ENCODE measurements at regions of chr7 and their contacts with region 1.

Region 1: DNA sequence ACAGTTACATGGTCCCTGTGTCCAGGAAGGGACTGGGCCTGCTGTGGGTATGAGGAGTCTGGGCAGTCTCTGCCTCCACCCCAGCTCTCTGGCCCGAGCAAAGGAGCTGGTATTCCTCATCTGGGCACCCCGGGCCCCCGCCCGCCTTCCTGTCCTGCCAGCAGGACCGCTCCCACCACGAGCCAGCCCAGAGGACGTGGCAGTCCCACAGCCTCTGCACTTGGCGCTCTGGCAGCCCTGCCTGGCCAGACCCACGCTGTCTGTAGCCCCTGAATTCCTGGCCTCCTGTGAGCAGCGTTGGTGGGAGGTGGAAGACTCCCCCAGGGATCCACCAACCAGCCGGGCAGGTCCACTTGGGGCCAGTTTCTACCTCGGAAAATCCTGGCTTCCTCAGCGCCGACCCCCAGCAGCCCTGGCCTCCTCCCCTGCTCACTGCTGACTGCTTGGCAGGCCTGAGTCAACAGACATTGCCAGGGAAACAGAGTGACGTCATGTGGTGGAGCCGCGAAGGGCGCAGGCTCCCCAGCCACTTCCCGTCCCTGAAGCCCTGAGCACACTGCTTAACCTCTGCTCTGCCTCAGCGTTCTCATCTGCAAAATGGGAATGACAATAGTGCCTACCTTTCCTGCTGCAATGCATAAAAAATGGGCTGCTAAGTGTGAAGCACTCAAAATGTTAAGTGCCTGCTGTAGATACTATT is 21.6 kb upstream of the LIMK1 start:
- DNase-seq: peak; percentile 78 to 88
- ATAC-seq: peak; percentile 90 to 96 (median 93)
- H3K4me3 ChIP-seq: peak overlapping the region in 7 of 10 donors; percentile 3 to 31 (median 20)
- H3K27ac ChIP-seq: peak overlapping the region in 9 of 10 donors; percentile 33 to 89 (median 80)
- H3K4me1 ChIP-seq: peaks cover 0 to 14% (median 8%) of the 10 kb centered on the region in 9 donors
- H3K27me3 ChIP-seq: no peaks in the 10 kb centered on the region
- CTCF ChIP-seq: no peak

Region 2: DNA sequence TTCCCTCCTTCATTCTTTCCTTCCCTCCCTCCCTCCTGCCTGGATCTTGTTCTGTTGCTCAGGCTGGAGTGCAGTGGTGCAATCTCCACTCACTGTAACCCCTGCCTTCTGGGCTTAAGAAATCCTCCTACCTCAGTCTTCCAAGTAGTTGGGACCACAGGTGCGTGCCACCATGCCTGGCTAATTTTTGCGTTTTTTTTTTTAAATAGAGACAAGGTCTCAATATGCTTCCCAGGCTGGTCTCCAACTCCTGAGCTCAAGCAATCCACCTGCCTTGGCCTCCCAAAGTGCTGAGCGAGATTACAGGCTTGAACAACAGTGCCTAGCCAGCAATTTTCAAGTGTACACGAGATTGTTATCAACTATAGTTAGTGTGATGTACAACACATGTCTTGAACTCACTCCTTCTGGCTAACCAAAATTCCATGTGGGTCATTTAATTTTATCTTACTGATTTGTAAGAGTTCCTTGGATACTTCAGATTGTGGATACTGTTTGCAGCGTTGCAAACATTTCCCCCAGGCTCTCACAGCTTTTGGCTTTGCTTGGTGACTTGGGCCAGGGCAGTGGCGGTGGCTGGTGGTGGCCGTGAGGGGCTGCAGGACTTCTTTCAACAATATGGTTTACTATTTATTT is 209.6 kb before region 1 on chr7:
- intact Hi-C with region 1: no loop called
- DNase-seq: no peak
- ATAC-seq: no peak
- H3K4me3 ChIP-seq: no peak overlapping the region
- H3K27ac ChIP-seq: peak overlapping the region in 2 of 10 donors; percentile 19 to 53
- H3K4me1 ChIP-seq: peaks cover 0 to 32% (median 13%) of the 10 kb centered on the region in 9 donors
- H3K27me3 ChIP-seq: peaks cover 0 to 29% (median 16%) of the 10 kb centered on the region in 7 donors
- CTCF ChIP-seq: no peak

Region 3: GRCh38 chr7:74269757-74270277 is 207.8 kb after region 1 on chr7:
- intact Hi-C with region 1: loop called in 1 of 10 experiments (anchors 10 kb)
- DNase-seq: peak in 1 of 2 donors; percentile 76
- ATAC-seq: peak in 5 of 8 donors; percentile 18 to 52 (median 38)
- H3K4me3 ChIP-seq: peak overlapping the region; percentile 45 to 67 (median 60)
- H3K27ac ChIP-seq: peak overlapping the region in 4 of 10 donors; percentile 23 to 62 (median 44)
- H3K4me1 ChIP-seq: peaks cover 3 to 41% (median 27%) of the 10 kb centered on the region in 9 donors
- H3K27me3 ChIP-seq: no peaks in the 10 kb centered on the region
- CTCF ChIP-seq: peak in 1 of 9 donors; percentile 14

Measured in heart right ventricle (tissue), 16 donors.